ENCODE measurements at regions of chr17 and their contacts with region 1.

Region 1: GRCh38 chr17:4789901-4790704 is 1.3 kb downstream of the GLTPD2 start:
- DNase-seq: peak; percentile 92
- ATAC-seq: peak; percentile 91
- H3K4me3 Mint-ChIP-seq: peak overlapping the region; percentile 64
- H3K27ac Mint-ChIP-seq: peak overlapping the region; percentile 93
- H3K4me1 Mint-ChIP-seq: peaks cover 25% of the 10 kb centered on the region
- H3K27me3 Mint-ChIP-seq: peaks cover 34% of the 10 kb centered on the region

Region 2: DNA sequence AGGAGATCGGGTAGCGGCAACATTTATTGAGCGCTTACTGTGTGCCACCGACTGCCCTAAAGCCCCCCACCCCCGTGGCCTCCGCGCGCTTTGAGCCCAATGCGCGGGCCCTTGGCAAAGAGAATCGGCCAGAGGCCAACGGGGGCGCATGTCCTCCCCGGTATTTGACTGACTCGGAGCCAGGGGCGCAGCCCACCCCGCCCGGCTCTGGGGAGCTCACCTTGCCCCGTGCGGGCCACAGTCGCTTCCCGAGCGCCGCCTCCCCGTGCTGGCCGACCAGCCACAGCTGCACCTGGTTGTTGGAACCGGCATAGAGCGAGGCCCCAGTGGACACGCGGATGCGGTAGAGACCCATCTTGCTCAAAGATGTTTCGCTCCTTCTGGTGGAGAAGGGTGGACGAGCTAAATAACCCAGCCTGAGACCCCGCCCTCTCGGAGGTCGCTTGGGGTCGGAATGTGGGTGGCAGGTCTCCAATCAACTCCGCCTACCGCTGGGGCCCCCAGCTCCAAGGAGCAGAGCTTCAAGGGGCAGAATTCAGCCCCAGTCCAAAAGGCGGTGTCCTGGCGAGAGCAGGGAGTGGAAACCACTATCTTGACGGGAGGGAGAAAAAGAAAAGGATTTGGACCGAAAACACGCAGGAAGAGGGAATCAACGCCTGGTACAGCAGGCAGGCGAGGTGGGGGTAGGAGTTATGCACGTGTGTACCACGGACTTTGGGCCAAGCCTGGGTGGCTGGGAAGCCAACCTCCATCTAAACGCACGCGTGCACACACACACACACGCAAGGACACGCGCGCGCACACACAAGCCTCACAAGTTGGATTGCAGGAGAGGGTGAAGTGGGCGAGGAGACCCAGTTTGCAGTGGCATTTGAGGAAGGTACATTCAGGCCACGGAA is 148.6 kb before region 1 on chr17 and contains the start of gene ALOX15:
- CTCF ChIA-PET with region 1: no interaction called
- POLR2A ChIA-PET with region 1: no interaction called
- intact Hi-C with region 1: loop called in 1 of 2 experiments (anchors 5 kb)
- DNase-seq: no peak
- ATAC-seq: no peak
- H3K4me3 Mint-ChIP-seq: no peak within 1 kb of the TSS
- H3K27ac Mint-ChIP-seq: no peak within 1 kb of the TSS
- H3K4me1 Mint-ChIP-seq: peaks cover 14% of the 10 kb centered on the region
- H3K27me3 Mint-ChIP-seq: peaks cover 61% of the 10 kb centered on the region
- total RNA-seq, gene ALOX15: not detected

Region 3: DNA sequence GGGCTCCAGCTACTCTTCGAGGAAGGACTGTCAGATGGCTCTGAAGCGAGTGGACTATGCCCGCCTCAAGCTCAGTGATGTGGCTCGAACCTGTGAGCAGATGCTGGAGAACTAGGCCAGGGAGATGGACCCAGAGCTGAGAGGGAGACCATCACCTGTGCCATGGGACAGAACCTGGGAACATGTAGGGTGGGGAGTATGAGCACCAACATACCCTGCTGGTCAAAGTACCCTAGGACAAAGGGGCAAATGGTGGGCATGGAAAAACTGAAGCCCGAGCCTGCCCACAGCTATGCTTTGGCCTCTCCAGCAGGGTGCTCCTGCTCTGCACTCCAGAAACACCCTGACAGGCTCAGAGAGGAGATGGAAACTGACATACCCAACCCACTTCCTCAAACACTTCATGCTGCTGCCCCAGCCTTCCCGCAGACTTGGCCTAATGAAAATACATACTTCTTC is 57.0 kb before region 1 on chr17:
- CTCF ChIA-PET with region 1: interaction called, 6 read pairs
- POLR2A ChIA-PET with region 1: interaction called, 3 read pairs
- intact Hi-C with region 1: loop called (anchors 1 to 5 kb)
- DNase-seq: no peak
- ATAC-seq: no peak
- H3K4me3 Mint-ChIP-seq: no peak overlapping the region
- H3K27ac Mint-ChIP-seq: peak overlapping the region; percentile 17
- H3K4me1 Mint-ChIP-seq: peaks cover 39% of the 10 kb centered on the region
- H3K27me3 Mint-ChIP-seq: peaks cover under 1% of the 10 kb centered on the region

Region 4: DNA sequence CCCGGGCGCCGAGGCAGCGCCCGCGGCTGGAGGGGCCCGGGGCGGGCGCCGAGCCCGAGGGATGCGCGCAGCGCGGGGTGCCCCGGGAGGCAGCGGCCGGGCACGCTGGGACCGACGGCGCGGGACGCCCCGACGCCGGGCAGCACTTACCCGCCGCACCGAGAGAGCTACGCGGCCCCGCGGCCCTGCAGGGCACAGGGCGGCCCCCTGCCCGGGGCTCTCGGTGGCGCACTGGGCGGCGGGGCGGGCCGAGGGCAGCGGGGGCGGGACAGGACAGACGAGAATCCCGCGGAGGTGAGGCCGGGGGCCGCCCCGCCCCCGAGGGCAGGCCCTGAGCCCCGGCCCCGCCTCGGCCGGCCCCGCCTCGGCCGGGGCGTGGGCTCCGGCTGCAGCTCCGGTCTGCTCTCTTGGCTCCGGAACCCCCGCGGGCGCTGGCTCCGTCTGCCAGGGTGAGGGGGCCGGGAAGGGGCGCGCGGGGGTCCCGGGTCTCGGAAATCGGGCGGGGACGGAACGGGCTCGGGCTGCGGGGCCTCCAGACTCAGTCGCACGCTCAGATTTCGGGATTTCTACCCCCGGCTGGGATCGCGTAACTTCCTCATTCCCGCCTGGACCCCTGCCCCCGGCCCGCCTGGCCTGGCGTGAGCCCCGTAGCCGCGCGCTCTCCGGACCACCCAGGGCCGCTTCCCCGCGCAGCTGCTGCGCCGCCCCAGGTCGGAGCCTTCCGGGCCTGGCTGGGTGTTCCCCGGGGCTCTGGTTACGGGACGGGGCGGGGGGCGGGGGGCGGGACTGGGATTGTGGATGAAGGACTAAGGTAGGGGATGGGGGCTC is 16.9 kb after region 1 on chr17 and contains the start of gene PLD2:
- CTCF ChIA-PET with region 1: interaction called, 14 read pairs
- POLR2A ChIA-PET with region 1: no interaction called
- intact Hi-C with region 1: loop called in 1 of 2 experiments (anchors 1 kb)
- DNase-seq: peak; percentile 93
- ATAC-seq: peak; percentile 98
- H3K4me3 Mint-ChIP-seq: peak within 1 kb of the TSS; percentile 73
- H3K27ac Mint-ChIP-seq: no peak within 1 kb of the TSS
- H3K4me1 Mint-ChIP-seq: peaks cover 7% of the 10 kb centered on the region
- H3K27me3 Mint-ChIP-seq: no peaks in the 10 kb centered on the region
- total RNA-seq, gene PLD2: 12.3 to 14.1 TPM

Region 5: GRCh38 chr17:4881761-4882555 is 91.9 kb after region 1 on chr17:
- CTCF ChIA-PET with region 1: interaction called, 5 read pairs
- POLR2A ChIA-PET with region 1: no interaction called
- intact Hi-C with region 1: loop called in 1 of 2 experiments (anchors 1 kb)
- DNase-seq: peak; percentile 84
- ATAC-seq: peak; percentile 94
- H3K4me3 Mint-ChIP-seq: no peak overlapping the region
- H3K27ac Mint-ChIP-seq: no peak overlapping the region
- H3K4me1 Mint-ChIP-seq: no peaks in the 10 kb centered on the region
- H3K27me3 Mint-ChIP-seq: no peaks in the 10 kb centered on the region

Region 6: GRCh38 chr17:4891411-4892342 is 101.6 kb after region 1 on chr17:
- CTCF ChIA-PET with region 1: interaction called, 5 read pairs
- POLR2A ChIA-PET with region 1: no interaction called
- intact Hi-C with region 1: loop called (anchors 1 to 2 kb)
- DNase-seq: no peak
- ATAC-seq: no peak
- H3K4me3 Mint-ChIP-seq: no peak overlapping the region
- H3K27ac Mint-ChIP-seq: no peak overlapping the region
- H3K4me1 Mint-ChIP-seq: no peaks in the 10 kb centered on the region
- H3K27me3 Mint-ChIP-seq: no peaks in the 10 kb centered on the region

Region 7: GRCh38 chr17:4903051-4903818 is 113.1 kb after region 1 on chr17 and contains the start of gene CHRNE:
- CTCF ChIA-PET with region 1: interaction called, 6 read pairs
- POLR2A ChIA-PET with region 1: no interaction called
- intact Hi-C with region 1: loop called (anchors 1 to 5 kb)
- DNase-seq: peak; percentile 89
- ATAC-seq: peak; percentile 44
- H3K4me3 Mint-ChIP-seq: peak within 1 kb of the TSS; percentile 65
- H3K27ac Mint-ChIP-seq: peak within 1 kb of the TSS; percentile 72
- H3K4me1 Mint-ChIP-seq: peaks cover 26% of the 10 kb centered on the region
- H3K27me3 Mint-ChIP-seq: no peaks in the 10 kb centered on the region
- total RNA-seq, gene CHRNE: 0.59 to 0.84 TPM